ENCODE measurements at regions of chr10 and their contacts with region 1.

Region 1: DNA sequence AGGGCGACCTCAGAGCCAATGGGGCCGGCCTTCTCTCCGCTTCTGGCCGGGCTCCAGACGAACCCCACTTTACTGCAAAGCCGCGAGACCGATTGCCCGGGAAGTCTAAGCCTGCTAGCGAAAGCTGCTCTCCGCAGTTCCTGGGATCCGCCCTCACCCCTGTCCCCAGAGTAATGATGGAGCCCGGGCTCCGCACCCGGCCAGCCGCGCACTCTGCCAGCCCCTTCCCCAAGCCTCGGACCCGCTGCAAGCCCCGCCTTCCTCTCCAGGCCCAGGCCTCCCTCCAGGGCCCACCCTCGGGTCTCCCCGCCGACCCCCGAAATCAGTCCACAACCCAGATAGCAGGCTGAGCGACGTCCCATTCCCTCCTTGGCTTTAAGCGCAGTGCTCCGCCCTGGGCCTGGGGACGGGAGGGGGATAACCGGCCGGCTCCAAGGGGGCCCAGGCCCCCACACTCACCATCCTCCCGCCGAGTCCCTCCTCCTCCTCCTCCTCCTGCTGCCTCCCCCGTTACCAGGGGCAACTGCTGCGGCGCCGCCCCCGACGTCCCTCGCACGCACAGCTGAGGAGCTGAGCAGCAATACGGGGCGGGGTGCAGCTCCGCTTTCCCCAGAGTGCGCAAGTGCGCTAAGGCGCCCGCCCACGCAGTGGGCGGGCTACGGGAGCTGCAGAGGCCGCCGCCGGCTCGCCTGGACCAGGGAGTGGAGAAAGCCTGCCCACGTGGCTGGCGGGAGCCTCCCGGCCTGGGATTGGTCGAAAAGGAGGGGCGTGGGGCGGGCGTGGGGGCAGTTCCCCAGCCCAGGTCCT is at the start of gene ARL3:
- DNase-seq: peak; percentile 96 to 100 (median 98)

Region 2: GRCh38 chr10:102641880-102642735 is 71.9 kb before region 1 on chr10:
- intact Hi-C with region 1: loop called (anchors 2 kb)
- DNase-seq: peak; percentile 96 to 100 (median 98)

Region 3: DNA sequence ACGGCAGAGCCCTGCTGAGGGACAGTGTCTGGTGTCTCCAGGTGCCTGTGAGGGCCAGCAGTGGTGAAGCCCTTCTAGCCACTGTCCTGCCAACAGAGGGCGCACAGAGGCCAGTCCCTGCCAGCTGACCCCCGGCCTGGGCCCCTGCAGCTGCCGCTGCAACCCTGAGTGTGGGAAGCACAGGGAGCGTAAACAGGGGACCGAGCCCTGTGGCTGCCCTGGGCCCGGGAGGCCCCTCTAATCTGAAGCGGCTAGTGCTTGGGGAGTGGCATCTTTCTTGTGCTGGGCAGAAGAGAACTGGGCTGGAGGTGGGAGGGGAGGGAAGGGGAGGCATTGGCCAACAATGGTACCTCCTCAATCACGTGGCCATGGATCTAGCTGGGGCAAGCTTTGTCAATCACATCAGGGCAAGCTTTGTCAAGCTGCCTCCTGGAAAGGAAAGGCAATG is 35.2 kb before region 1 on chr10:
- intact Hi-C with region 1: loop called (anchors 5 kb)
- DNase-seq: peak; percentile 42 to 97 (median 80)

Region 4: DNA sequence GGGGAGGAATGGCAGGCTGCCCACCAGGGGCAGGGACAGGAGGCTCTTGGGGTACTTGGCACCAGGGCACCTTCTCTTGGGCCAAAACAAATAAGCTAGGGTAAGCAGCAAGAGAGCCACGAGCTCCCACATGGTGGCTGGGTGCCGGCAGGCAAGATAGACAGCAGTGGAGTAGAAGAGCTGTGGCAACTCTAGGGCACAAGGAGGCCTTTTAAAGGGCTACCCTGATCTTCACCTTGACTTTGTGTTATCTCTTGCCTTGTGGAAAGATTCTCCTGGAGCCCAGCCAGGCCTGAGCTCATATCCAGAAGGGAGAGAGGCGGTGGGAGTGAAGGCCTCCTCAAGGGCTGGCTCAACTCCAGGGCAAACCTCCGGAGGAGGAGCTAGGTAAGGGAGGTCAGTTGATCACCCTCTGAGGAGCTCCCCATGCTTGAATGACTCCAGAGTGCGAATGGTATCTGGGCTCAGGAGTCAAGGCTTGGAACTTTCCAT is 123.3 kb after region 1 on chr10 and contains the start of gene CYP17A1:
- intact Hi-C with region 1: no loop called
- DNase-seq: no peak